ENCODE measurements at regions of chr10 and their contacts with region 1.

Region 1: DNA sequence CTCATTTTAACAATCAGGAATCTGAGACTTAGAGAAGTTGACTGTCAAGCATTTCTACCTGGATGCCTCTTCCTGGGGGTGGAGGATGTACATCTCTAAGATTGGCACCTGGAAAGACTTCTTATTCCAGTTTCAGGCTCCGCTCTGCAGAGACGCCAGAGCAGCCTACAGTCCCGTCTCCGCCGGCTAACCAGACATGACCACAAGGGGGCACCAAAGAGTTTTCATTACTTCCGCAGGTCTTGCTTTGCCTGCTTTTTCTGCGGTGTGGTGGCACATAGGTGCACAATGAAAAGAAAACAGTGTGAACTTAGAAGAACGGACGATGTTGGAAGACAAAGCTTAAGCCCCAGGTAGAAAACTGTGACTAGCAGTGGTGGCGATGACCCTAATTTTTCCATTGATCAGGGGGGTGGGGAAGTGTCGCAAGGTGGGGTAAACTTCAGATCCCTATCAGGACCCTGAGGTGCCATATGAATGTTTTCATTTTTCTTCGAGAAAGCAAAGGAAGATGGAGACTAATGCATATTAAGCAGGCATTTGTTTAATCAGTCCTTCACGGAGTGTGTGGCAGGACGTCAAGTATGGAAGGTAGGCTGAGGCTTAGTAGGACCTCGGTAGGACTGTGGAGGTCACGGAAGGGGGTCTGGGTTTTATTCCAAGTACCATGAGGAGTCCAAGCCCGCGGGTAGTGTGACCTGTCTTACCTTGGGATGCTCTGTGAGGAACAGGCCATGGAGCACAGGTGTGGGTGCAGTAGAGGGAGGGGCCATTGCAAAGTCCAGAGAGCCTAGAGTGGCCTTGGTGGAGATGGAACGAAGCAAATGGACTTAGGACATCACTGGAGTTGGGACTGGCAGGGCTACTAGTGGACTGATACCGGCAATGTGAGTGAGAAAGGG is 60.1 kb upstream of the SORCS3 start:
- DNase-seq: peak; percentile 36 to 94
- H3K4me3 ChIP-seq: no peak overlapping the region
- H3K27ac ChIP-seq: no peak overlapping the region
- H3K4me1 ChIP-seq: no peaks in the 10 kb centered on the region
- H3K27me3 ChIP-seq: no peaks in the 10 kb centered on the region; a peak in 1 of 7 replicates
- CTCF ChIP-seq: peak; percentile 77 to 92 (median 87)
- EP300 ChIP-seq: no peak
- POLR2A ChIP-seq: no peak
- RAD21 ChIP-seq: peak; percentile 82 to 88

Region 2: DNA sequence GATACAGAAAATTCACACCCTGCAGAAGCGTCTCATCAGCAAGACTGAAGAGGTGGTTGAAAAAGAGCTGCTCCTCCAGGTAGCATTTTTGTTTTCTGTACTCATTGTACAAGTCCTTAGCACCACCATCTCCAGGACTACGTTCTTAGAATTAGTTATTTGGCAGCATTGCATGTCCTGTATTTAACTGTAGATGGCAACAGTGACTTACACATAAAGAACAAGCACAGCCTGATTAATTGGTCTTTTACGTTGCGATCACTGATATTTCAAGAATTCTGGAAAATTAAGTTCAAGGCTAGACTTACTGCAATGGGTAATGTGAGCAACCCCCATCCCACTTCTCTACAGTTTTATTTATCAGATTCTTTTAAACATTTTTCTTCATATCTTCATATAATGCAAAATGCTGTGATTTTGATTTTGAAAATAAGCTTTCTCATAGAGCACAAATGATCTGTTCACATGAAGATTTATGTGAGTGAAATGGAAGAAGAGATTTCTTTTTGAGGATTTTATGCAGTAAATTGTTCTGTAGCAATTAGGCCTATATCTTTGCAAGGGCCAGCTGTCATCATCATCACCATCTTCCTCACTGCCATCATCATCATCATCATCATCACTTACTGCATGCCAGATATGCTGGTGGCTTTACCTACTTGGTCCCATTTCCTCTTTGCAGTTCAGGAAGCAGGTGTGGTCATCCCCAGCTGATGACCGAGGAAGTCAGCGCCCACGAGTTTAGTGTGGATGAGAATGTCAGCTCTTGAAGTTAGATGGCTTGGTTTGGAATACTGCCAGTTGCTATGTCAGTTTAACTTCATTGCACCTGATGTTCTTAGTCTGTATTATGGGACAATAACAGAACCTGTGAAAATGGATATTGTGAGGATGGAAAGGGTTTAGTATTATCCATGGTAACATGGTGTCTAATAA is 174.0 kb before region 1 on chr10:
- CTCF ChIA-PET with region 1: interaction called, 26 read pairs
- POLR2A ChIA-PET with region 1: no interaction called
- DNase-seq: no peak
- H3K4me3 ChIP-seq: no peak overlapping the region
- H3K27ac ChIP-seq: no peak overlapping the region
- H3K4me1 ChIP-seq: peaks cover 0 to 2% (median 0%) of the 10 kb centered on the region in 4 experiments; a peak in 2 of 7 replicates
- H3K27me3 ChIP-seq: peaks cover 0 to 1% (median 0%) of the 10 kb centered on the region in 4 experiments; a peak in 1 of 7 replicates
- CTCF ChIP-seq: peak in 2 of 3 experiments; percentile 62 to 71; a peak in 2 of 4 replicates
- EP300 ChIP-seq: no peak
- POLR2A ChIP-seq: no peak
- RAD21 ChIP-seq: peak; percentile 87 to 90

Region 3: GRCh38 chr10:104548090-104548489 is 32.9 kb before region 1 on chr10:
- CTCF ChIA-PET with region 1: interaction called, 15 read pairs
- POLR2A ChIA-PET with region 1: no interaction called
- DNase-seq: peak; percentile 5 to 54
- H3K4me3 ChIP-seq: no peak overlapping the region
- H3K27ac ChIP-seq: no peak overlapping the region
- H3K4me1 ChIP-seq: peaks cover 0 to 3% (median 1%) of the 10 kb centered on the region in 4 experiments; a peak in 3 of 7 replicates
- H3K27me3 ChIP-seq: no peaks in the 10 kb centered on the region
- CTCF ChIP-seq: no peak
- EP300 ChIP-seq: no peak
- POLR2A ChIP-seq: no peak
- RAD21 ChIP-seq: no peak

Region 4: DNA sequence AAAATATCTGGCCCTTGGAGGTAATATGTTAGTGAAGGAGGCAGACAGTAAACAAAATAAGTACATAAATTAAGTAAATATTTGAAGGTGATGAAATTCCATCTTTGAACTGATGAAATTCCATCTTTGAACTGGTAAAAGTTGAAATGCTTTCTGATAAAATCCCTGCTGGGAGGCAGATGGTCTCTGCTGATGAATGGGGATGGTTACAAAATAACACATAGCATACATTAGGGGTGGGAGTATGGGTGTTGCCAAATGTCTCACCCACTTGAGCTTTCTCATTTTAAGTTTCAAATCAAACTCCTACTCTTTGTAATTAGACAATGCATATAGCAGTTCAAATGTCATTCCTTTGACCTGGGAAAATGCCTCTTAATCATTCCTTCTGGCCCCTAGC is 17.5 kb before region 1 on chr10:
- CTCF ChIA-PET with region 1: interaction called, 11 read pairs
- POLR2A ChIA-PET with region 1: interaction called, 4 read pairs
- DNase-seq: no peak
- H3K4me3 ChIP-seq: no peak overlapping the region
- H3K27ac ChIP-seq: no peak overlapping the region
- H3K4me1 ChIP-seq: no peaks in the 10 kb centered on the region
- H3K27me3 ChIP-seq: no peaks in the 10 kb centered on the region
- CTCF ChIP-seq: no peak
- EP300 ChIP-seq: no peak
- POLR2A ChIP-seq: no peak
- RAD21 ChIP-seq: no peak

Region 5: DNA sequence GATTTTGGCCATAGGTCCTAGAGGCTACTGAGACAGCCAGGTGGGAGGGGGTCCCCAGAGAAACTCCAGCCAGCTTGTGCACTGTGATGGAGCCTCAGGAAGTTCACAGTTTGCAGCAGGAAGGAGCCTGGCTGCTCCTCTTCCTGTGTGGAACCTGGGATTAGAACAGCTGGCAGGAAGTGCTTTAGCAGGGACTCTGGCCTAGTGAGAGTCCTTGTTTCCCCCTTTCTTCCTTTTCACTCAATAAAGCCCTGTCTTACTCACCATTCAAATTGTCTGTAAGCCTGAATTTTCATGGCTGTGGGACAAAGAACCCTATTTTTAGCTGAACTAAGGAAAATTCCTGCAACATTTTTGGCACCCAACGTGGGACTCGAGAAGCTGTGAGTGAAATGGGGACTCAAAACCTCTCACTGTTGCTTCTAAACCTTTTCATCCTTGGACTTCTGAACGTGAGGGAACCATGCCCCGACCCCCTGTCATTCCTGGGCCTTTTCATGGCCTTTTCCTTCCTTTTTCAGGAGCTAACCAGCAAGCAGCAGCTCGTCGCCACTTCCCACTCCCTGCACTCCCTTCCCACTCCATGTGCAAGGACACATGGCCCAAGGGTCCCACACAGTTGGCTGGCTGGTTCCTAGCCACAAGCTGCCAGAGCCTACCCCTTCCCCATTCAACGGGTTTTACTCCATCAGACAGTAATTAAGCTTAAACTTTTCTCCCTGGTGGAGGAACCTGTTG is 27.2 kb after region 1 on chr10:
- CTCF ChIA-PET with region 1: interaction called, 78 read pairs
- POLR2A ChIA-PET with region 1: no interaction called
- DNase-seq: no peak
- H3K4me3 ChIP-seq: no peak overlapping the region
- H3K27ac ChIP-seq: no peak overlapping the region
- H3K4me1 ChIP-seq: no peaks in the 10 kb centered on the region
- H3K27me3 ChIP-seq: no peaks in the 10 kb centered on the region
- CTCF ChIP-seq: no peak
- EP300 ChIP-seq: no peak
- POLR2A ChIP-seq: no peak
- RAD21 ChIP-seq: no peak

Region 6: DNA sequence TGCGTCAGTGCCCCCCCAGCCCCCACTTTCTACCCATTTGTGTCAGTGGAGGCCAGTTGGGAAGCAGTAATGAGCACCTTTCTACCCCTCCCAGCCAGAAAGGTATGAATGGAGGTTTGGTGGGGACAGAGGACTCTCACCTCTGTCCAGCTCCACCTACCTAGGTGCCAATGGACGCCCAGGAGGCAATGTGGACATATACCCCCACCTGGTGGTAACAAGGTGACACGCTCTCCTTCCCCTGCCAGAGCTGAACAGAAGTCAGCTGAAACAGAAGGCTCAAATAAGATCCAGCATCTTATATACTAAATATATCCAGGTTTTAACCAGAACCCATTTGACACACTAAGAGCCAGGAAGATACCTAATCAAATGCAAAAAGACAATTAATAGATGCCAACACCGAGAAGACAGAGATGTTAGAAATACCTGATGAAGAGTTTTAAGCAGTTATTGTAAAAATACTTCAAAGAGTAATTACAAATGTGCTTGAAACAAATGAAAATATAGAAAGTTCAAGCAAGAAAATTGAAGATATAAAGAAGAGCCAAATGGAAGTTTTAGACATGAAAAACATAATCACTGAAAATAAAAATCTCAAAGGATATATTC is 41.7 kb after region 1 on chr10:
- CTCF ChIA-PET with region 1: interaction called, 101 read pairs
- POLR2A ChIA-PET with region 1: interaction called, 3 read pairs
- DNase-seq: peak in 1 of 2 experiments; percentile 60
- H3K4me3 ChIP-seq: no peak overlapping the region
- H3K27ac ChIP-seq: no peak overlapping the region
- H3K4me1 ChIP-seq: no peaks in the 10 kb centered on the region
- H3K27me3 ChIP-seq: no peaks in the 10 kb centered on the region
- CTCF ChIP-seq: peak; percentile 88 to 95 (median 91)
- EP300 ChIP-seq: no peak
- POLR2A ChIP-seq: no peak
- RAD21 ChIP-seq: peak; percentile 98 to 99